SK-MEL-5 (cell line): ENCODE measurements at regions of chr4 and their contacts with region 1.

Region 1: GRCh38 chr4:14943749-14944148 is 58.5 kb upstream of the CPEB2 start:
- DNase-seq: peak; percentile 99

Region 2: DNA sequence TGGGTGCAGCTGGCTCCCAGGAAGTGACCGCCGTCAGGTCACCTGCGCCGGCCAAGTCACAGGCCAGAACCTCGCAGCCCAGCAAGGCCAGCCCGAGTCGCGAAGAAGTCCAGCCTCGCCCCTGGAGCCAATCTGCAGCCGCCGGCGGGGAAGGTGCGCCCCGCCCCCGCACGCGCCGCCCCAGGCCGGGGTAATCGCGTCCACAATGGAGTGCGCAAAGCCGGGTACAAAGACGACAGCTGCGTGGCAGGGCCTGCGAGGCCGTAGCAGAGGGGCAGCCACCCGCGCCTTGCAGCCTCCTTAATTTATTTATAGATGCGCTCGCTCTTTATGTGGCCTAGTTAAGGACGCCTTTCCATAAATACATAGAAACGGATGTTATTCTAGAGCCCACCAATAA is 80.9 kb before region 1 on chr4:
- in situ Hi-C with region 1: loop called (anchors 10 kb)
- DNase-seq: no peak